Heart left ventricle (tissue), 16 donors: ENCODE measurements at regions of chr6 and their contacts with region 1.

Region 1: GRCh38 chr6:35381132-35381531 is 38.8 kb downstream of the PPARD start:
- DNase-seq: no peak
- ATAC-seq: no peak
- H3K4me3 ChIP-seq: no peak overlapping the region
- H3K27ac ChIP-seq: no peak overlapping the region
- H3K4me1 ChIP-seq: peaks cover 0 to 21% (median 4%) of the 10 kb centered on the region in 12 donors
- H3K27me3 ChIP-seq: no peaks in the 10 kb centered on the region
- CTCF ChIP-seq: no peak
- POLR2A ChIP-seq: no peak

Region 2: DNA sequence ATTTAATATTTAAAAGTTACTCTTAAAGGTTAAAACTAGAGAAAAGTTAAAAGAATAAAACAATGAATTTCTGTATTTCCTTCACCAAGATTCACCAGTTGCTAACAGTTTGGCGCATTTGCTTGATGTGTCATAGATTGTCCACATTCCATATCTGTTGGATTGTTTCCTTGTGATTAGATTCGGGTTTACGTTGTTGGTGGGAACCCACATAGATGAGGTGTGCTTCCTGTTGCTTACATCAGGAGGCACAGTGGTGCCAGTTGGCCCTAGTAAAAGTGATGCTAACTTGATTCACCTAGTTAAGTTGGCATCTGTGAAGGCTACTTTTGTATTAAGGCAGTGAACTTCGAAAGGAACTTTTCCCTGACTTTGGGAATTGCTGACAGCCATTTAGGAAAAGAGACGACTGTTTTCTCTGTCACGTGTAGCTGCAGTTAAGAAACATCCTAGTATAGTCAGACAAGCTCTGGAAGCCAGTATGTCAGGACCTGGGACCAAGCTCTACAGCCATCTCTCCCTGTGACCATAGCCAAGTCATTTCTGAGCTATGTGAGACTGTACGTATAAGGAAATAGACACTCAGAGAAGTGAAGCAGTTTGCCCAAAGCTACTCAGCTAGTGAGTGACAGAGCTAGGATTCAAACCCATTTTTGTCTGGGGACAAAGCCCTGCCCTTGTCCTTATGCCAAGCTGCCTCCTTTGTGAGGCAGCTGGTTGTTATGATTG is 10.3 kb after region 1 on chr6:
- intact Hi-C with region 1: loop called in 1 of 10 experiments (anchors 2 kb)
- DNase-seq: no peak
- ATAC-seq: no peak
- H3K4me3 ChIP-seq: no peak overlapping the region
- H3K27ac ChIP-seq: no peak overlapping the region
- H3K4me1 ChIP-seq: peaks cover 0 to 31% (median 17%) of the 10 kb centered on the region in 12 donors
- H3K27me3 ChIP-seq: no peaks in the 10 kb centered on the region
- CTCF ChIP-seq: no peak
- POLR2A ChIP-seq: no peak

Region 3: DNA sequence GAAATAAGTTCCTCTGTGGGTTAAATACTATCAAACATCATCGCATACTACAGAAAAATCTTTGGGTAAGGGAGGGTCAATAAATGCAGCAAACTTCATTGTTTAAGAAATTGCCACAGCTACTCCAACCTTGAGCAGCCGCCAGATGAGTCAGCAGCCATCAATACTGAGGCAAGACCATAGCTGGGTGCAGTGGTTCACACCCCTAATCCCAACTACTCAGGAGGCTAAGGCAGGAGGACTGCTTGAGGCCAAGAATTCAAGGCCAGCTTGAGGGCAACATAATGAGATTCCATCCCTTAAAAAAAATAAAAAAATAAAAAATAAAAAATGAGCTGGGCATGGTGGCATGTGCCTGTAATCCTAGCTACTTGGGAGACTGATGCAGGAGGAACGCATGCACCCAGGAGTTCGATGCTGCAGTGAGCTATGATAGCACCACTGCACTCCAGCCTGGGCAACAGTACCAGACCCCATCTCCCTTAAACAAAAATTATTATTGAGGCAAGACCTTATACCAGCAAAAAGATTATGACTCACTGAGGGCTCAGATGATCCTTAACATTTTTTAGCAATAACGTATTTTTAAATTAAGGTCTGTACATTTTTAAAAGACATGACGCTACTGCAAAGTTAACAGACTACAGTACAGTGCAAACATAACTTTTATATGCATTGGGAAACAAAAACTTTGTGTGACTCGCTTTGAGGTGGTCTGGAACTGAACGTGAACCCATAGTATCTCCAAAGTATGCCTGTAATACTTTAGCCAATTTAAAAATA is 530.9 kb after region 1 on chr6:
- intact Hi-C with region 1: no loop called
- DNase-seq: no peak
- ATAC-seq: no peak
- H3K4me3 ChIP-seq: no peak overlapping the region
- H3K27ac ChIP-seq: no peak overlapping the region
- H3K4me1 ChIP-seq: no peaks in the 10 kb centered on the region
- H3K27me3 ChIP-seq: no peaks in the 10 kb centered on the region
- CTCF ChIP-seq: no peak
- POLR2A ChIP-seq: no peak